Dorsolateral prefrontal cortex (tissue), 120 donors: ENCODE measurements at regions of chr18 and their contacts with region 1.

Region 1: GRCh38 chr18:77067291-77068061 is 65.1 kb downstream of the MBP start:
- DNase-seq: peak in 4 of 10 donors; percentile 54 to 74 (median 68)
- H3K4me3 ChIP-seq: peak overlapping the region in 2 of 59 donors; percentile 1 to 4
- H3K27ac ChIP-seq: peak overlapping the region in 50 of 59 donors; percentile 7 to 85 (median 58)
- H3K27me3 ChIP-seq: no peaks in the 10 kb centered on the region
- CTCF ChIP-seq: peak in 4 of 56 donors; percentile 5 to 36 (median 19)

Region 2: GRCh38 chr18:76943542-76944339 is 123.7 kb before region 1 on chr18:
- intact Hi-C with region 1: no loop called
- DNase-seq: no peak
- H3K4me3 ChIP-seq: no peak overlapping the region
- H3K27ac ChIP-seq: no peak overlapping the region
- H3K27me3 ChIP-seq: no peaks in the 10 kb centered on the region
- CTCF ChIP-seq: no peak

Region 3: DNA sequence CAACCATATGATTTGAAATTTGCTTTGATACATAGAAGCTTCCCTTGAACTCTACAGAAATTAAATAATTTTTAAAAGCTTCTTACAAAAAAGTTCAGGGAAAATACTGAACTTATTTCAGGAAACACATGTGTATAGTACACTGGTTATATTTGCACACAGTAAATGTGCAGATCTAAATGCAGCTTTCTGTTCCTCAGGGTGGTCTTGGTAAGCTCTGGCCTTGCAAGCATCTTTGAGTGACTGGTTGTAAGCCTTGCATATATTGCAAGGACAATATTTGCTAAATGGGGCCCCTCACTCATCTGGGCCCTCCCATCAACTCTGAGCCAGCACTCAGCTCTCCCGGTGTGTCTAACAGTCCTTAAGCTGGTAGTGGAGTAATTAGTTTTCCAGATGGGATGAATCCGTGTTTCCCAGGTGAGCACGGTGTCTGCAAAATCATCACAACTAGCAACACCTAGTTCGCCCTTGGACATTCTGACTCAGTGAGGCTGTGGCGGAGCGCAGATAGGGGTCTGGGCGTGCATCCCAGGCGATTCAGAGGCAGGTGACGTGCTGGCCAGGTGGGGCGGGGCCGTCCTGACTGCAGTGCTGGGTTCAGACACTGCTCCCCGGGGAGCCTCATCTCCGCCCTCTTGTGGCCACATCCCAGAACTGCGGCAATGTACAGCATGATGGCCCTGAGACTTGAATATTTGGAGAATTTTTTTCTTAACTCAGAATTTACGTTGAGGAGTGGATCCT is 84.5 kb before region 1 on chr18:
- intact Hi-C with region 1: no loop called
- DNase-seq: peak; percentile 77 to 88 (median 82)
- H3K4me3 ChIP-seq: peak overlapping the region in 12 of 59 donors; percentile 18 to 42 (median 34)
- H3K27ac ChIP-seq: peak overlapping the region in 40 of 59 donors; percentile 6 to 93 (median 62)
- H3K27me3 ChIP-seq: no peaks in the 10 kb centered on the region
- CTCF ChIP-seq: peak; percentile 79 to 96 (median 88)

Region 4: DNA sequence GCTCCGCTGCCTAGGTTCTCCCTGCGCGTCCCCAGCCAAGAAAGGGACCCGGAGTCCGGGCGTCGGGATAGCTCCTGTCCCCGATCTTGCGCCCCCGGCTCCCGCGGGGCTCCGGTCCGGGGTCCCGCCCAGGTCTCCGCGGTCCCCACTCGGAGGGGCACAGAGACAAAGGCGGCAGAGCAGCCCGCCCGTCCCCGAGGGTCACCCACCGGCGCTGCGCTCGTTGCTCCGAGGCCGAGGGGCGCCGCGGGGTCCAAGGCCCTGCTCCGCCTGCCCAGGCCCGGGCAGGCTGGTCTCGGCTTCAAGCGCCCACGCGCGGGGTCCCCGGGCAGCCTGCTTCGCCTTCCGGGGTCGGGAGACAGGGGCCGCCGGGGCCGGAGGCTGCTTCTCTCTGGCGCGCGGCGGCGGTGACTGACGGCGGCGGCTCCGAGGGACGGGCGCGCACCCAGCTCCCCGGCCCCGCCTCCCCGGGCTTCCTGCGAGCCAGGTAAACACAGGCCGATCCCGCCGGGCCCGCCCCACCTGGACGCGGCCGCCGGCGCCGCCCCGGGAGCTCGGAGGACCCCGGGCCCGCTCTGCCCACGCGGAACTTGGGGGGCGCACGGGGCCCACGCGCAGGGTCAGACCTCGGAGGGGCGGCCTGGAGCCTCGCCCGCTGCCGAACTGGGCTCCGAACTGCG is 65.0 kb after region 1 on chr18 and contains the start of gene MBP:
- intact Hi-C with region 1: loop called in 1 of 2 experiments (anchors 5 kb)
- DNase-seq: peak in 2 of 10 donors; percentile 64 to 69
- H3K4me3 ChIP-seq: peak within 1 kb of the TSS; percentile 49 to 85 (median 73)
- H3K27ac ChIP-seq: peak within 1 kb of the TSS in 56 of 59 donors; percentile 43 to 93 (median 80)
- H3K27me3 ChIP-seq: peaks cover 0 to 44% (median 7%) of the 10 kb centered on the region in 45 donors
- CTCF ChIP-seq: no peak
- total RNA-seq, gene MBP: 632 to 18,605 (median 5,065) TPM

Region 5: GRCh38 chr18:77178559-77178958 is 111.1 kb after region 1 on chr18:
- intact Hi-C with region 1: no loop called
- DNase-seq: no peak
- H3K4me3 ChIP-seq: no peak overlapping the region
- H3K27ac ChIP-seq: no peak overlapping the region
- H3K27me3 ChIP-seq: no peaks in the 10 kb centered on the region
- CTCF ChIP-seq: no peak

Region 6: DNA sequence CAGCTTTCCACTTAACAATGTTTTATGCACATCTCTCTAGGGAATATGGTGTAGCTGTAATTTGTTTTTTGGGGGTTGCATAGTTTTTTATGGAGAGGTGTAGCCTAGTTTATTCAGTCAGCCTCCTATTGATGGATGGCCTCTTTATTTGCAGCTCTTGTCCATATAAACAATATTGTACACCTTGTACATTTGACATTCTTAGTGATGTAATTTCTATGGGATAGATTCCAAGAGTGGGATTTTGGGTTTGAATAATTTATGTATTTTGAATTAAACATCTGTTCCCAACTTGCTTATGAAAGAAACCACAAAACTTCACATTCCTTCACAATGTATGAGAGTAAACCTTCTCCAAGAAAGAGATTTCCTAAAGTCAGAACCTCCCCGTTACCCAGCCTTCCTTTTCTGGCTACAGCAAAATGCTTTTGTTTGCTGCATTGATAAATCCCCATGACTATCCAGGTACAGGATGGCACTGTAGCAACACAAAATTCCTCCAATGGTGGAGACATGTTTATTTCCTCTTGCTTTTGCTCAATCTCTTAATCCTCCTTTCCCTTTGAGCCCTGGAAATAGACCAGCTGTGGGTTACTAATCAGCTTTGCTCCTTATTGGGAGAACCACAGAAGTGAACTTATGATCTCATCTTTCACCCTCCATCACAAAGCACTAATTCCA is 123.7 kb after region 1 on chr18:
- intact Hi-C with region 1: no loop called
- DNase-seq: no peak
- H3K4me3 ChIP-seq: no peak overlapping the region
- H3K27ac ChIP-seq: no peak overlapping the region
- H3K27me3 ChIP-seq: no peaks in the 10 kb centered on the region
- CTCF ChIP-seq: no peak

Region 7: GRCh38 chr18:77207540-77207939 is 140.1 kb after region 1 on chr18:
- intact Hi-C with region 1: loop called (anchors 5 kb)
- DNase-seq: peak in 1 of 10 donors; percentile 44
- H3K4me3 ChIP-seq: peak overlapping the region in 23 of 59 donors; percentile 1 to 51 (median 20)
- H3K27ac ChIP-seq: peak overlapping the region in 3 of 59 donors; percentile 17 to 54 (median 36)
- H3K27me3 ChIP-seq: no peaks in the 10 kb centered on the region
- CTCF ChIP-seq: peak in 55 of 56 donors; percentile 14 to 74 (median 55)